Mammary epithelial cell (primary cell): ENCODE measurements at regions of chr1 and their contacts with region 1.

Region 1: GRCh38 chr1:6554031-6554906 is at the start of gene NOL9:
- DNase-seq: peak; percentile 83
- H3K4me3 ChIP-seq: peak within 1 kb of the TSS; percentile 96 to 100 (median 97)
- H3K27ac ChIP-seq: peak within 1 kb of the TSS; percentile 75
- H3K4me1 ChIP-seq: peaks cover 14% of the 10 kb centered on the region
- H3K27me3 ChIP-seq: no peaks in the 10 kb centered on the region
- CTCF ChIP-seq: peak; percentile 68 to 92
- total RNA-seq, gene NOL9: 25.5 to 36.4 TPM

Region 2: DNA sequence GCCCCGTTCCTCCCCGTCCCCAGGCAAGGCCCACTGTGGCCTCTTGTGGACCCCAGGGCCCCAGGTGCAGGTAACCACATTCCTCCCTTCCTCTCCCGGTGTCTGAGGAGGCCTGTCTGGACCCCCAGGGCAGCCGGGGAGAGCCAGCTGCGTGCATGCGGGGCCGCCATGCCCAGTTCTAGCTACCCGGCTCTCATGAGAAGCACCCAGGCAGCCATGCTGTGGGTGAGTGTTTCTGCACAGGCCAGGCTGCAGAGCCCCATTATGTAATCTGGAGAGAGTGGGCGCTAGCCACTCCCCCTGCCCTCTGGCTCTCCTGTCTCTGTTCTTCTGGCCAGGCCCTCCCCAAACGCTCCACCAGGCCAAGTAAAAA is 44.4 kb before region 1 on chr1:
- CTCF ChIA-PET with region 1: no interaction called
- dilution Hi-C with region 1: no loop called
- in situ Hi-C with region 1: no loop called
- intact Hi-C with region 1: no loop called
- DNase-seq: no peak
- H3K4me3 ChIP-seq: no peak overlapping the region
- H3K27ac ChIP-seq: no peak overlapping the region
- H3K4me1 ChIP-seq: peaks cover 12% of the 10 kb centered on the region
- H3K27me3 ChIP-seq: no peaks in the 10 kb centered on the region
- CTCF ChIP-seq: no peak

Region 3: GRCh38 chr1:6579374-6580118 is 25.3 kb after region 1 on chr1 and contains the start of gene ZBTB48:
- CTCF ChIA-PET with region 1: no interaction called
- dilution Hi-C with region 1: no loop called
- in situ Hi-C with region 1: no loop called
- intact Hi-C with region 1: loop called (anchors 2 kb)
- DNase-seq: peak; percentile 97
- H3K4me3 ChIP-seq: peak within 1 kb of the TSS; percentile 62 to 78 (median 69)
- H3K27ac ChIP-seq: peak within 1 kb of the TSS; percentile 80
- H3K4me1 ChIP-seq: peaks cover 39% of the 10 kb centered on the region
- H3K27me3 ChIP-seq: no peaks in the 10 kb centered on the region
- CTCF ChIP-seq: no peak
- total RNA-seq, gene ZBTB48: 15.3 to 29.5 TPM

Region 4: GRCh38 chr1:6601049-6601922 is 47.0 kb after region 1 on chr1:
- CTCF ChIA-PET with region 1: no interaction called
- dilution Hi-C with region 1: no loop called
- in situ Hi-C with region 1: no loop called
- intact Hi-C with region 1: loop called (anchors 1 kb)
- DNase-seq: peak; percentile 99
- H3K4me3 ChIP-seq: peak overlapping the region; percentile 58 to 98 (median 95)
- H3K27ac ChIP-seq: peak overlapping the region; percentile 97
- H3K4me1 ChIP-seq: peaks cover 42% of the 10 kb centered on the region
- H3K27me3 ChIP-seq: no peaks in the 10 kb centered on the region
- CTCF ChIP-seq: peak in 1 of 2 donors; percentile 6

Region 5: GRCh38 chr1:6634371-6635052 is 80.2 kb after region 1 on chr1:
- CTCF ChIA-PET with region 1: no interaction called
- dilution Hi-C with region 1: no loop called
- in situ Hi-C with region 1: no loop called
- intact Hi-C with region 1: loop called (anchors 2 kb)
- DNase-seq: peak; percentile 16
- H3K4me3 ChIP-seq: no peak overlapping the region
- H3K27ac ChIP-seq: no peak overlapping the region
- H3K4me1 ChIP-seq: no peaks in the 10 kb centered on the region
- H3K27me3 ChIP-seq: no peaks in the 10 kb centered on the region
- CTCF ChIP-seq: peak; percentile 35 to 67

Region 6: GRCh38 chr1:6646499-6647148 is 92.4 kb after region 1 on chr1:
- CTCF ChIA-PET with region 1: interaction called, 4 read pairs
- dilution Hi-C with region 1: no loop called
- in situ Hi-C with region 1: no loop called
- intact Hi-C with region 1: loop called (anchors 2 kb)
- DNase-seq: peak; percentile 24
- H3K4me3 ChIP-seq: no peak overlapping the region
- H3K27ac ChIP-seq: no peak overlapping the region
- H3K4me1 ChIP-seq: no peaks in the 10 kb centered on the region
- H3K27me3 ChIP-seq: no peaks in the 10 kb centered on the region
- CTCF ChIP-seq: peak; percentile 50 to 65

Region 7: DNA sequence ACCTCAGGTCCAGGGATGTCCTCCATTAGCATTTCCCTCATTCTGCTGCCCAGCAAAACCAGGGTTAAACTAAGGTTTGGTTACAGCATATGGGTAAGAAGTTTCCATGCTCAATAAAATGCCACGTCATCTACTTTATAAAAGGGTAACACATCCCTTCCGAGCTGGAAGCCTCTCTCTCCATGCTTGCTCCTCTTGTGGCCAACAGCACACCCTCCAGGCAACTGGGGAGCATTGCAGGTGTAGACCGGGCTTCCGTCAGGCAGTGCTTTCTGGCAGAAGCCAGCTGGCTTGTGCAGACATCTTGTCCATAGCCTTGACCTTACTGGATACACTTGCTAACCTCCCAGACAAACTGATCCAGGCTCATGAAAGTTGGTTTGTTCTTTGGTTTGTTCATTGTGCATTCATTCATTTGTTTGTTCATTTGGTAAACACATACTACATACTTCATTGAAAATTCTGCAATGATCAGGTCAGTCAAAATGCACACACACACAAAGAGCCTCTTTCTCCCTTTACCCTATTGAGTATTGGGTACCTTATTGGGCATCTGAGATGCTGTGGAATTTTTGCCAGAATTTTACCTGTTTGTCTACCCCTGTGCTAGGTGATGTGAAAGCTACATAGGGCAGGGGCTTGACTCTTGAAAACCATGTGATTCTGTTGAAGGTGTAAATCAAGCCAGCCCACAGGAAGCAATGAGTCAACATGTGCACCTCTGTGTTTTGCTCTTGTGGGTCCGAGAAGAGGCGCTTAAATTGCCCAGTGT is 653.8 kb after region 1 on chr1:
- CTCF ChIA-PET with region 1: no interaction called
- dilution Hi-C with region 1: no loop called
- in situ Hi-C with region 1: no loop called
- intact Hi-C with region 1: loop called (anchors 5 kb)
- DNase-seq: peak; percentile 64
- H3K4me3 ChIP-seq: no peak overlapping the region
- H3K27ac ChIP-seq: no peak overlapping the region
- H3K4me1 ChIP-seq: no peaks in the 10 kb centered on the region
- H3K27me3 ChIP-seq: no peaks in the 10 kb centered on the region
- CTCF ChIP-seq: peak; percentile 99